ENCODE measurements at regions of chr18 and their contacts with region 1.

Region 1: DNA sequence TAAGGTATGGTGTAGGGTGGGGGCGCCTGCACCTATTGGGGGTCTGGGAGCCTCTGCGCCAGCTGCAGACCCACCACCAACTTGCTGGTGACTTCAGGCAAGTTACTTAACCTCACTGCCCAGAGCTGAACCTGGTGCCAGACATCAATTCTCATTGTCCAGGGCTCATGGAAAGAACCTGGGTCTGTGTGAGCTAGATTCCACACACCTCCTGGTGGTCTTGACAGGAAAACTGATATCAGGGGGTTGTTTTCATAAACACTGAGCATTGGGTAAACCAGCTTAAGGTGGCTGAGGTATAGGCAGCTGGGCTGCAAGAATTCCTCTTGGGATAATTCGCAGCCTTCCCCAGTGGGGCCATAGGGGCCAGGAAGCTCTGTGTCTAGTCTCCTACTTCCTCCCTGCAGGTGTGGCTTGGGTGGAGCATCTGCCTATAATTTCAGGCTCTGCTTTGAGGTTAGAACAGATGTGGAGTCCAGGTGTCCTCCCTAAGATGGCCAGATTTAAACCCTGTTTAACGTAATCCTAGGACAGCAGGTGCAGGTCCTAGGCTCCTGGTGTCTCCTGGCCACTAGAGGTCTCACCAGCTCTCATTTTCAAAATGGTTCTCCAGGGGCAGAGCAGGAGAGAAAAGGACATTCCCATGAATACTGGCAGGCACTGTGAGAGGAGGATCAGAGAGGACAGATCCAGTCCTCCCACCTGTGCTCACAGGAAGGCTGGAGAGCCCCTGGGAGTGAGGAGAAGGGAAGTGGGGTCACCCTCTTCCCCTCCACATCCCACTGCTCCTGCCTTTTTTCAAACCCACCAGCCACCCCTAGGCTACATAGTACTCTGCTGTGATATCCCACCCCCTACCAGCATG is 100.4 kb upstream of the SMAD2 start:
- DNase-seq: peak; percentile 30 to 70
- H3K4me3 ChIP-seq: no peak overlapping the region
- H3K27ac ChIP-seq: no peak overlapping the region
- H3K4me1 ChIP-seq: peaks cover 0 to 40% (median 24%) of the 10 kb centered on the region in 4 donors
- H3K27me3 ChIP-seq: no peaks in the 10 kb centered on the region
- CTCF ChIP-seq: peak; percentile 70

Region 2: DNA sequence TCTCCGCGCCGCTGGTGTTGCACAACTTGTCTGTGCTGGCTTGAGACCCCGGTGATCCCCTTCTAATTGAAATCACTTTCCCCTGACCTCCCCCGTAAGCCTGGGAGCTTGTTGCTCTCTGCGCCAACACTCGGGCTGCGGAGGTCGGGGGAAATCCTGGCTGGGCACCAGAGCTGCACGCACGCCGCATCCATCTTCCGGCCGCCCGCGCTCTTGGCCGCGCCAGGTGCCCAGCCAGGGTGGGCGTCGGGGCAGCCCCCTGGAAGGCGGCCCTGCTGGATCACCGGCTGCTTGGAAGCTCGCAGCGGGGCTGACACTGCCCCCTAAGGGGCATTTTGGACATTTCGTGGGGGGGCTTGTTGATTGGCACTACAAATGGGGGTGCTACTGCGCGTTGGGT is 499.1 kb before region 1 on chr18:
- intact Hi-C with region 1: no loop called
- DNase-seq: no peak
- H3K4me3 ChIP-seq: no peak overlapping the region
- H3K27ac ChIP-seq: no peak overlapping the region
- H3K4me1 ChIP-seq: no peaks in the 10 kb centered on the region
- H3K27me3 ChIP-seq: peaks cover 0 to 20% of the 10 kb centered on the region in 2 donors
- CTCF ChIP-seq: no peak

Region 3: GRCh38 chr18:47809420-47809819 is 221.4 kb before region 1 on chr18:
- intact Hi-C with region 1: no loop called
- DNase-seq: no peak
- H3K4me3 ChIP-seq: no peak overlapping the region
- H3K27ac ChIP-seq: no peak overlapping the region
- H3K4me1 ChIP-seq: no peaks in the 10 kb centered on the region
- H3K27me3 ChIP-seq: no peaks in the 10 kb centered on the region
- CTCF ChIP-seq: no peak

Region 4: DNA sequence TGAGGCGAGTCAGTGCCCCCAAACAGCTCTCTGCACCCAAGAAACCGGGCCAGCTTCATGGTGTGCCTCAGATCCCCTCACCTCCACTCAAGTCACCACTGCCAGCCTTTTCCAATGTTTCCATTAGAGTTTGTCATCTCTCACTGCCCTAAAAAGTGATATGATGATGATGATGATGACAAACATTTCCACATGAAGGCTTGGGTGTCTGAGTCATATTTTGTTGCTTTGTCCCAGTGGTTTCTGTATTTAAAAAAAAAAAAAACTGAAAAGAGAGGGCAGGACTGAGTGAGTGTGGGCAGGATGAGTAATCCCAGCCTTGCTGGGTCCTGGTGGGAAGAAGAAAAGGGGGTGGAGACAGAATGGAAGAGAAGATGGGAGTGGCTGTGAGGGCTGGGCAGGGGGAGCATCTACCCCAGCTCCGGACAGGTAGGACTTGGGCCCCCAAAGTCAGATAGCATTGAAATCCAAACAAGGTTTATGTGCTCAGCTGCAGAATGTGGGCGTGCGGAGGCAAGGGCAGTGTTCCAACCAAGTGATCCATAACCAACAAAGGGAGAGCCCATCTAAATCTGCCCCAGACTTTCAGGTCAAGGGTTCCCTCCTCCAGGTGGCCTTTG is 299.7 kb after region 1 on chr18:
- intact Hi-C with region 1: loop called (anchors 10 kb)
- DNase-seq: no peak
- H3K4me3 ChIP-seq: no peak overlapping the region
- H3K27ac ChIP-seq: peak overlapping the region; percentile 41 to 53
- H3K4me1 ChIP-seq: peaks cover 0 to 59% (median 30%) of the 10 kb centered on the region in 4 donors
- H3K27me3 ChIP-seq: no peaks in the 10 kb centered on the region
- CTCF ChIP-seq: no peak

Measured in tibial artery (tissue), 4 donors.